Activated CD4-positive, alpha-beta T cell treated with anti-CD3 and anti-CD28 coated beads, Interleukin-2, amount 10 ng/mL, durations not matched to agents 24 days and 14 days (primary cell): ENCODE measurements at regions of chr16 and their contacts with region 1.

Region 1: GRCh38 chr16:8905168-8905762 is 23.1 kb downstream of the LITAFD start:
- DNase-seq: peak; percentile 75
- H3K4me3 Mint-ChIP-seq: no peak overlapping the region
- H3K27ac Mint-ChIP-seq: no peak overlapping the region
- H3K4me1 Mint-ChIP-seq: peaks cover 9% of the 10 kb centered on the region
- H3K27me3 Mint-ChIP-seq: no peaks in the 10 kb centered on the region

Region 2: GRCh38 chr16:8958344-8959167 is 53.3 kb after region 1 on chr16:
- intact Hi-C with region 1: loop called (anchors 5 kb)
- DNase-seq: peak; percentile 77
- H3K4me3 Mint-ChIP-seq: peak overlapping the region; percentile 94
- H3K27ac Mint-ChIP-seq: peak overlapping the region; percentile 88
- H3K4me1 Mint-ChIP-seq: peaks cover 70% of the 10 kb centered on the region
- H3K27me3 Mint-ChIP-seq: no peaks in the 10 kb centered on the region

Region 3: GRCh38 chr16:9008601-9009260 is 103.5 kb after region 1 on chr16:
- intact Hi-C with region 1: loop called (anchors 5 kb)
- DNase-seq: peak; percentile 90
- H3K4me3 Mint-ChIP-seq: no peak overlapping the region
- H3K27ac Mint-ChIP-seq: no peak overlapping the region
- H3K4me1 Mint-ChIP-seq: no peaks in the 10 kb centered on the region
- H3K27me3 Mint-ChIP-seq: peaks cover 12% of the 10 kb centered on the region